Right lobe of liver (tissue), 6 donors: ENCODE measurements at regions of chr4 and their contacts with region 1.

Region 1: DNA sequence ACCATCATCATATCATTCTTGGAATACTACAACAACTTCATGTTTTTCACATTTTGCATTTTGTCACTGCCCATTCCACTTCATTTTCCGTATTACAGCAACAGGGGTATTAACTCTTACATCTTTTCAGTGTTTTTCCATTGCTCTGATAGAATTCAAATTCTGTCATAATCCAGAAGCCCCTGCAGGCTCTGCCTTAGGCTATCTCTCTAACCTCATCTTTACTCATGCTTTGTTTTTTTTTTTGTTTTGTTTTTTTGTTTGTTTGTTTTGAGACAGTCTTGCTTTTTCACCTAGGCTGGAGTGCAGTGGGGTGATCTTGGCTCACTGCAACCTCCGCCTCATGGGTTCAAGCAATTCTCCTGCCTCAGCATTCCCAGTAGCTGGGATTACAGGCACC is 4.3 kb upstream of the LARP1B start:
- DNase-seq: no peak
- ATAC-seq: no peak
- H3K4me3 ChIP-seq: no peak overlapping the region
- H3K27ac ChIP-seq: no peak overlapping the region
- H3K4me1 ChIP-seq: no peaks in the 10 kb centered on the region
- H3K27me3 ChIP-seq: no peaks in the 10 kb centered on the region
- CTCF ChIP-seq: no peak
- POLR2A ChIP-seq: no peak

Region 2: GRCh38 chr4:127965062-127965802 is 91.6 kb before region 1 on chr4 and contains the starts of genes ABHD18 and MFSD8:
- intact Hi-C with region 1: loop called in 1 of 2 experiments (anchors 5 kb)
- DNase-seq: peak; percentile 99 to 100 (median 100)
- ATAC-seq: peak; percentile 96 to 99 (median 98)
- H3K4me3 ChIP-seq: peak within 1 kb of the TSS; percentile 94 to 97 (median 96)
- H3K27ac ChIP-seq: peak within 1 kb of the TSS; percentile 88 to 96 (median 95)
- H3K4me1 ChIP-seq: peaks cover 0 to 15% (median 0%) of the 10 kb centered on the region in 4 donors
- H3K27me3 ChIP-seq: no peaks in the 10 kb centered on the region
- CTCF ChIP-seq: peak; percentile 25 to 50 (median 28)
- POLR2A ChIP-seq: peak; percentile 75
- total RNA-seq, gene ABHD18: 8.3 to 12.2 (median 10.2) TPM
- total RNA-seq, gene MFSD8: 9.4 to 17.1 (median 13.3) TPM